IMR-90 (cell line): ENCODE measurements at regions of chr11 and their contacts with region 1.

Region 1: DNA sequence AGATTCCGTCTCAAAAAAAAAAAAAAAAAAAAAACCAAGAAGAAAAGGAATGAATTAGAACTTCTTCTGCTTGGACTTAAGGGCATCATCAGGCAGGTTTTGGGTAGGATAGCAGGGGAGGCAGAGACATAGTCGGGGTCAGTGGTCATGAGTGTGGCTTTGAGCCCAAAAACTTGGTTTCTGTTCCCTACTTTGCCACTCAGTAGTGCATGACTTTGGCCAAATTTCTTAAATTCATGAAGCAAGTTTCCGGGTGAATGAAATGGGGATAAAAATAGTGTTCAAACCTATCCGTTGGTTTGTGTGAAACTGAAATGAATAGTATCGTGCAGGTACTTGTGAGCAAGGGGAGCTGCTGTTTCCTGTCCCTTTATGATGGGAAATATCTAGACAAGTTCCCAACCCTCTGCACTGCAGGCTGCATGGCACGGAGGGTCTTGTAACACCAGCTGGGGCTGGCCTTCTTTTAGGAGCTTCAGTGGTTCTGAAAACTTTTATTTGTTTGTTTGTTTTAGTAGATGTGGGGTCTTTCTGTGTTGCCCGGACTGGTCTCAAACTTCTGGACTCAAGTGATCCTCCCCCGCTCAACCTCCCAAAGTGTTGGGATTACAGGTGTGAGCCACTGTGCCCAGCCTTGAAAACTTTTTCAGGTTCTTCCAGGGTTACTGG is 18.4 kb downstream of the NEAT1 start:
- DNase-seq: peak; percentile 43
- ATAC-seq: no peak
- H3K4me3 ChIP-seq: no peak overlapping the region
- H3K27ac ChIP-seq: no peak overlapping the region
- H3K4me1 ChIP-seq: peaks cover 4% of the 10 kb centered on the region; the same call in 1 of the 2 replicates
- H3K27me3 ChIP-seq: no peaks in the 10 kb centered on the region
- CTCF ChIP-seq: no peak
- POLR2A ChIP-seq: peak; percentile 78
- RAD21 ChIP-seq: no peak

Region 2: DNA sequence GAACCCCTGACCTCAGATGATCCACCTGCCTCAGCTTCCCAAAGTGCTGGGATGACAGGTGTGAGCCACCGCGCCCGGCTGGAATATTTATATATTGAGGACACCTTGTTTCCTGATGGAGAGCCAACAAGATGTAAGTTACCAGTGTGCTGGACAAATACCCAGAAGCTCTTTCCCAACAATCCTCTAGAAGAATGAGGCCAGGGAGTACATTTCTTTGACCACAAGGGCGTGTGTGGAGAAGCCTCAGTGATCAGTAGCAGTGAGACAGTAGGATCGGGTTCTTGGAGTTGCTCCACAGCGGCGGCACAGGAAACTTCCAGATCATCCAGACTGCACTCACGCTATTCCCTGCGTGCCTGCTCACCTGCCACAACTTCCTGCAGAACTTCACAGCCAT is 189.5 kb before region 1 on chr11:
- CTCF ChIA-PET with region 1: no interaction called
- POLR2A ChIA-PET with region 1: no interaction called
- dilution Hi-C with region 1: no loop called
- in situ Hi-C with region 1: no loop called
- intact Hi-C with region 1: no loop called
- DNase-seq: peak; percentile 11
- ATAC-seq: no peak
- H3K4me3 ChIP-seq: no peak overlapping the region
- H3K27ac ChIP-seq: no peak overlapping the region
- H3K4me1 ChIP-seq: no peaks in the 10 kb centered on the region
- H3K27me3 ChIP-seq: peaks cover under 1% of the 10 kb centered on the region; the same call in 1 of the 2 replicates
- CTCF ChIP-seq: no peak
- POLR2A ChIP-seq: no peak
- RAD21 ChIP-seq: no peak

Region 3: GRCh38 chr11:65390099-65390941 is 50.6 kb before region 1 on chr11:
- CTCF ChIA-PET with region 1: no interaction called
- POLR2A ChIA-PET with region 1: interaction called, 11 read pairs
- dilution Hi-C with region 1: no loop called
- in situ Hi-C with region 1: no loop called
- intact Hi-C with region 1: no loop called
- DNase-seq: no peak
- ATAC-seq: peak; percentile 28
- H3K4me3 ChIP-seq: no peak overlapping the region
- H3K27ac ChIP-seq: peak overlapping the region; percentile 73
- H3K4me1 ChIP-seq: peaks cover 27% of the 10 kb centered on the region
- H3K27me3 ChIP-seq: no peaks in the 10 kb centered on the region
- CTCF ChIP-seq: no peak
- POLR2A ChIP-seq: no peak
- RAD21 ChIP-seq: no peak

Region 4: GRCh38 chr11:65540297-65541092 is 99.5 kb after region 1 on chr11:
- CTCF ChIA-PET with region 1: no interaction called
- POLR2A ChIA-PET with region 1: no interaction called
- dilution Hi-C with region 1: no loop called
- in situ Hi-C with region 1: no loop called
- intact Hi-C with region 1: no loop called
- DNase-seq: peak; percentile 82
- ATAC-seq: peak; percentile 94
- H3K4me3 ChIP-seq: peak overlapping the region; percentile 59
- H3K27ac ChIP-seq: peak overlapping the region; percentile 73
- H3K4me1 ChIP-seq: peaks cover 5% of the 10 kb centered on the region; the same call in 1 of the 2 replicates
- H3K27me3 ChIP-seq: no peaks in the 10 kb centered on the region
- CTCF ChIP-seq: peak; percentile 88
- POLR2A ChIP-seq: no peak
- RAD21 ChIP-seq: peak; percentile 77